PC-3 (cell line): ENCODE measurements at regions of chr19 and their contacts with region 1.

Region 1: GRCh38 chr19:38634757-38635482 is 12.5 kb upstream of the ACTN4 start:
- DNase-seq: peak; percentile 73
- ATAC-seq: peak; percentile 27; the same call in 1 of the 2 replicates
- H3K4me3 ChIP-seq: no peak overlapping the region
- H3K27ac ChIP-seq: no peak overlapping the region
- H3K4me1 ChIP-seq: peaks cover 25% of the 10 kb centered on the region
- H3K27me3 ChIP-seq: no peaks in the 10 kb centered on the region
- CTCF ChIP-seq: peak; percentile 78

Region 2: GRCh38 chr19:38544034-38544958 is 90.6 kb before region 1 on chr19:
- CTCF ChIA-PET with region 1: interaction called, 3 read pairs
- POLR2A ChIA-PET with region 1: no interaction called
- intact Hi-C with region 1: loop called (anchors 2 kb)
- DNase-seq: peak; percentile 80
- ATAC-seq: peak; percentile 92
- H3K4me3 ChIP-seq: peak overlapping the region; percentile 47; the same call in 1 of the 2 replicates
- H3K27ac ChIP-seq: peak overlapping the region; percentile 32; the same call in 1 of the 2 replicates
- H3K4me1 ChIP-seq: peaks cover 4% of the 10 kb centered on the region; the same call in 1 of the 2 replicates
- H3K27me3 ChIP-seq: no peaks in the 10 kb centered on the region
- CTCF ChIP-seq: peak; percentile 74

Region 3: GRCh38 chr19:38583219-38583984 is 51.5 kb before region 1 on chr19:
- CTCF ChIA-PET with region 1: no interaction called
- POLR2A ChIA-PET with region 1: no interaction called
- intact Hi-C with region 1: no loop called
- DNase-seq: no peak
- ATAC-seq: no peak
- H3K4me3 ChIP-seq: no peak overlapping the region
- H3K27ac ChIP-seq: no peak overlapping the region
- H3K4me1 ChIP-seq: no peaks in the 10 kb centered on the region
- H3K27me3 ChIP-seq: no peaks in the 10 kb centered on the region
- CTCF ChIP-seq: no peak

Region 4: DNA sequence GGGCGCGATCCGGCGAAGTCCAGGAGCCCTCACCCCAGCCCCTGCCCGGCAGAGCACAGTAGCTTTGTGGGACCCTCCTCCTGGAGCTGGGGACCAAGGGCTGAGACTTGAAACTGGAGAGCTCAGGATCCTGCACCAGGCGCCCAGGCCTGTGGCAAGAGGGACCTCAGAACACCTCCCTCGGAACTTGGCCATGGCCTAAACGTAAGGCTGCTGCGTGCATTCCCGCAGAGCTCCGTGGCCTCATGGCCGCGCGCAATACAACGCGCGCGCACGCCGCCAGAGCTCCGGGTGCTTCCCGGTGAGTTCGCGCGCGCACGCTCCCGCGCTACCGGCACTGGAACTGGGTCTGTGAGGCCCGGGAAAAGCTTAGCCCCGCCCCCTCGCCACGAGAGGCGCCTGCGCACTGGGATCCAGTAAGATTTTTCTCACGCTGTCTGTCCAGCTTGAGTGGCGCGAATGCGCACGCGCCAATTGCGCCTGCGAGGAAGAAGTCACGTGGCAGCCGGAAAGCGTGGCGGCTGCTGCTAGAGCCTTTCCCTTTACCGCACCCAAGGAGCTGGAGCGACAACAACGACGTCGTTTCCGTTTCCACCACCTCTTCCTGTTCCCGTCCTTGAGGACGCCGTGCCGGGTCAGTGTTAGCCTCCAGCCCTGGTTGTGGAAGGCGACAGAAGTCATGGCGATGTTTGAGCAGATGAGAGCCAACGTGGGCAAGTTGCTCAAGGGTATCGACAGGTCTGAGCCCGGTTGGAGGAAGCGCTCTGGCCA is 16.1 kb before region 1 on chr19 and contains the start of gene EIF3K:
- CTCF ChIA-PET with region 1: interaction called, 17 read pairs
- POLR2A ChIA-PET with region 1: no interaction called
- intact Hi-C with region 1: no loop called
- DNase-seq: peak; percentile 98
- ATAC-seq: peak; percentile 92
- H3K4me3 ChIP-seq: peak within 1 kb of the TSS; percentile 92
- H3K27ac ChIP-seq: peak within 1 kb of the TSS; percentile 62
- H3K4me1 ChIP-seq: peaks cover 14% of the 10 kb centered on the region
- H3K27me3 ChIP-seq: no peaks in the 10 kb centered on the region
- CTCF ChIP-seq: no peak
- total RNA-seq, gene EIF3K: 310 and 414 TPM in 2 replicates